Activated CD4-positive, alpha-beta memory T cell treated with anti-CD3 and anti-CD28 coated beads for 36 hours (primary cell): ENCODE measurements at regions of chr19 and their contacts with region 1.

Region 1: GRCh38 chr19:45584332-45585157 is at the start of gene OPA3:
- DNase-seq: peak; percentile 100
- H3K4me3 Mint-ChIP-seq: peak within 1 kb of the TSS; percentile 96
- H3K27ac Mint-ChIP-seq: peak within 1 kb of the TSS; percentile 97
- H3K4me1 Mint-ChIP-seq: peaks cover 11% of the 10 kb centered on the region
- H3K27me3 Mint-ChIP-seq: peaks cover 1% of the 10 kb centered on the region
- total RNA-seq, gene OPA3: 10.8 to 11.0 TPM

Region 2: GRCh38 chr19:45423589-45424190 is 160.9 kb before region 1 on chr19 and contains the start of gene ERCC1:
- CTCF ChIA-PET with region 1: no interaction called
- POLR2A ChIA-PET with region 1: no interaction called
- intact Hi-C with region 1: loop called (anchors 10 kb)
- DNase-seq: peak; percentile 92
- H3K4me3 Mint-ChIP-seq: peak within 1 kb of the TSS; percentile 85
- H3K27ac Mint-ChIP-seq: peak within 1 kb of the TSS; percentile 88
- H3K4me1 Mint-ChIP-seq: peaks cover 54% of the 10 kb centered on the region
- H3K27me3 Mint-ChIP-seq: peaks cover 2% of the 10 kb centered on the region
- total RNA-seq, gene ERCC1: 59.4 to 59.7 TPM

Region 3: GRCh38 chr19:45506246-45506990 is 78.1 kb before region 1 on chr19:
- CTCF ChIA-PET with region 1: no interaction called
- POLR2A ChIA-PET with region 1: no interaction called
- intact Hi-C with region 1: loop called (anchors 1 kb)
- DNase-seq: peak; percentile 99
- H3K4me3 Mint-ChIP-seq: peak overlapping the region; percentile 86
- H3K27ac Mint-ChIP-seq: peak overlapping the region; percentile 94
- H3K4me1 Mint-ChIP-seq: peaks cover 35% of the 10 kb centered on the region
- H3K27me3 Mint-ChIP-seq: no peaks in the 10 kb centered on the region

Region 4: GRCh38 chr19:45615795-45616708 is 31.5 kb after region 1 on chr19:
- CTCF ChIA-PET with region 1: no interaction called
- POLR2A ChIA-PET with region 1: interaction called, 3 read pairs
- intact Hi-C with region 1: loop called (anchors 1 kb)
- DNase-seq: peak; percentile 94
- H3K4me3 Mint-ChIP-seq: no peak overlapping the region
- H3K27ac Mint-ChIP-seq: peak overlapping the region; percentile 67
- H3K4me1 Mint-ChIP-seq: peaks cover 28% of the 10 kb centered on the region
- H3K27me3 Mint-ChIP-seq: no peaks in the 10 kb centered on the region